ENCODE measurements at regions of chr19 and their contacts with region 1.

Region 1: DNA sequence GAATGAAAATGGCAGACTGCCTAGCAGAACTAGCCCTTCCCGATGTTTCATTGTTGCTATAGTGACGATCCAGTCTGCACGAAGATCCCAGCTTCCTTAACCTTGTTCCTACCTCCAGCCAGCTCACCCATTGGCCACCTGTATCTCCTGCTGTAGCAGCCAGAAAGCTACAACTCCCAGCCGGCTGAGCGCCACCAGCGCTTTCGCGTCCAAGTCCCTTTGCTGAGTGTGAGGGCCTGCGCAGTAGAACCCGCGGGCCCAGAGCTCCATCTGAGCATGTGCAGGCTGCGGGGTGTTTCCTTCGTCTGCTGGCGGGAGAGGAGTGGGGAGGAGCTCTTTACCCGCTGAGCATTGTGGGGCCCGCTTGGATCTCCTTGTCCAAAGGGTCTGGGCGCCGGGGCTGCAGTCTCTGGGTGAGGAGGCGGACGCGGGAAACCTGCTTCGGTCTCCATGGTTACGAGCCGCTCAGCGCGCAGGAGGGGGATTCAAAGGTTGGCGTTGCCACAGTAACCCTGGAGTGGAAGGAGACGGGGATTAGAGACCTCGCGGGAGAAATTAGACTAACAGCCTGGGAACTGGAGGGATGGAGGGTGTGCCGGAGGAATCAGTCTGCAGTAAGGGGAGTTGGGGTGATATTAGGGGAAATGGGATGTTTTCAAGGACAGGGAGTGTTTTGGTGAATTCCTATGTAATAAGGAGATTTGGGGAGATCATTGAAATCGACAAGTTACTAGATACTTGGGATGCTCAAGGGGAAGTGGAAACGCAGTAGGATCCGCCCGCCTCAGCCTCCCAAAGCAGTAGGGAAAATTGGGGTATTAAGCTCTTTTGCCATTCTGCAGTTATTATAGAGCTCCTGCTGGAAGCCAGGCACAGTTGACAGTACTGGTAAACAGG is 33.5 kb downstream of the ZSWIM9 start:
- DNase-seq: peak; percentile 94 to 95
- H3K4me3 ChIP-seq: peak overlapping the region; percentile 67
- H3K27ac ChIP-seq: no peak overlapping the region; the same call in 1 of the 2 replicates
- H3K4me1 ChIP-seq: peaks cover 14% of the 10 kb centered on the region
- H3K27me3 ChIP-seq: no peaks in the 10 kb centered on the region
- CTCF ChIP-seq: no peak

Region 2: DNA sequence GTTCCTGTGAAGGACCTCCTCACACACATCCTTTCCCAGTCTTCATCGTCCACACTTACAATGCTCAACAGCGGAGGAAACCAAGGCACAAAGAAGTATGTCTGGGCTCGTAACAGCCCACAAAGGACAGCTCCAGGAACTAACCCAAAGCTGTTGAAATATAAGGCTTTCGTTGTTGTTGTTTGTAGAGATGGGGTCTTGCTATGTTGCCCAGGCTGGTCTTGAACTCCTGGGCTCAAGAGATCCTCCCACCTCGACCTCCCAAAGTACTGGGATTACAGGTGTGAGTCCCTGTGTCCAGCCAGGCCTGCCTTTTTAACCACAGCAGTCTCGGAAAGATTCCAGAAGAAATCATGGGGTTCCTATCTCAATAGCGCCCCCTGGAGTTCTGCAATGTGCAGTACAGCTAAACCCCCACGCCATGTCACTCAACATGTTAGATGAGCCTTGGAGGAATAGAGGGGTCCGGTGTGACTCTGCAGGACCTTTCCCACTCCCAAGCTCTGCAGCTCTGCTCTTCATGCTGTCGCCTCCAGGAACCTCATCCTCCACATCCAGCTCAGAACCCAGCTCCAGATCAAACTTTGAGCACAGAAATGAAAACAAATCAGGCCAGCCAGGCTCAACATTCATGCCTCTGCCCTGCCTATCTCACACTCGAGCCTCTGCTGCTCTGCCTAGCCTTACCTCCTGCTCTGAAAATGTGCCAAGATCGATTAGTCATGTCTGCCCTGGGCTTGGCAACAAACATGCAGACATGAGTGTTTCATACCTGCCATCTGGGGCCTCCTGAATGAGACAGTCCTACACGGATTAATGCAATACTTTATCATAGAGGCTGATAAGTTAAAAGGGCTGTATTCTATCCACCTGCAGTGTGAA is 100.9 kb before region 1 on chr19:
- CTCF ChIA-PET with region 1: interaction called, 12 read pairs
- POLR2A ChIA-PET with region 1: no interaction called
- intact Hi-C with region 1: no loop called
- DNase-seq: peak; percentile 31 to 61
- H3K4me3 ChIP-seq: no peak overlapping the region
- H3K27ac ChIP-seq: no peak overlapping the region
- H3K4me1 ChIP-seq: no peaks in the 10 kb centered on the region
- H3K27me3 ChIP-seq: no peaks in the 10 kb centered on the region; the same call in 1 of the 2 replicates
- CTCF ChIP-seq: peak; percentile 93

Region 3: DNA sequence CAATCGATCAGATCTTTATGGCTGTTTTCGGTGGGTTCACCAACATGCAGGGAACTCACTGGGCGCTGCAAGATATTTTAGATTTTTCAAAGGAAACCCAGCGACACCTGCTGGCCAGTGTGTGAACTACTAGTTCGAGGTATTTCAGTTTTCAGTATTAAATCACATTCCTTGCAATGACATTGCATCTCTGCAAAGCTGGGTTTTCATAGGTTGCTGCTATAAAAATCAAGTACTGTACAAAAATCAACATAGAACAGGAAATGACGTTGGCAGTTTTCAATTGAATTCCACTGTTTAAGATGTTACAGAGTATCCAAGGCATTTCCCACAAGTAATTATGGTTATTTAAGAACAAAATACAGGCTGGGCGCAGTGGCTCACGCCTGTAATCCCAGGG is 51.4 kb before region 1 on chr19:
- CTCF ChIA-PET with region 1: interaction called, 19 read pairs
- POLR2A ChIA-PET with region 1: no interaction called
- intact Hi-C with region 1: no loop called
- DNase-seq: peak; percentile 46 to 54
- H3K4me3 ChIP-seq: no peak overlapping the region
- H3K27ac ChIP-seq: peak overlapping the region; percentile 32; the same call in 1 of the 2 replicates
- H3K4me1 ChIP-seq: no peaks in the 10 kb centered on the region
- H3K27me3 ChIP-seq: no peaks in the 10 kb centered on the region
- CTCF ChIP-seq: peak; percentile 97

Region 4: GRCh38 chr19:48637948-48638830 is 434.2 kb after region 1 on chr19:
- CTCF ChIA-PET with region 1: no interaction called
- POLR2A ChIA-PET with region 1: no interaction called
- intact Hi-C with region 1: no loop called
- DNase-seq: peak; percentile 83 to 94
- H3K4me3 ChIP-seq: peak overlapping the region; percentile 74
- H3K27ac ChIP-seq: peak overlapping the region; percentile 84
- H3K4me1 ChIP-seq: peaks cover 30% of the 10 kb centered on the region
- H3K27me3 ChIP-seq: no peaks in the 10 kb centered on the region
- CTCF ChIP-seq: peak; percentile 51; the same call in 1 of the 2 replicates

Measured in PC-9 (cell line).